Panc1 (cell line): ENCODE measurements at regions of chr1 and their contacts with region 1.

Region 1: GRCh38 chr1:155091071-155091709 is 12.6 kb downstream of the EFNA3 start:
- DNase-seq: no peak
- ATAC-seq: peak; percentile 69
- H3K4me3 ChIP-seq: peak overlapping the region in 1 of 2 experiments; percentile 33; a peak in 2 of 4 replicates
- H3K27ac ChIP-seq: peak overlapping the region; percentile 24; the same call in 1 of the 2 replicates
- H3K4me1 ChIP-seq: peaks cover 18% of the 10 kb centered on the region; the same call in 1 of the 2 replicates
- H3K27me3 ChIP-seq: peaks cover 2% of the 10 kb centered on the region; the same call in 1 of the 2 replicates
- CTCF ChIP-seq: peak; percentile 98

Region 2: DNA sequence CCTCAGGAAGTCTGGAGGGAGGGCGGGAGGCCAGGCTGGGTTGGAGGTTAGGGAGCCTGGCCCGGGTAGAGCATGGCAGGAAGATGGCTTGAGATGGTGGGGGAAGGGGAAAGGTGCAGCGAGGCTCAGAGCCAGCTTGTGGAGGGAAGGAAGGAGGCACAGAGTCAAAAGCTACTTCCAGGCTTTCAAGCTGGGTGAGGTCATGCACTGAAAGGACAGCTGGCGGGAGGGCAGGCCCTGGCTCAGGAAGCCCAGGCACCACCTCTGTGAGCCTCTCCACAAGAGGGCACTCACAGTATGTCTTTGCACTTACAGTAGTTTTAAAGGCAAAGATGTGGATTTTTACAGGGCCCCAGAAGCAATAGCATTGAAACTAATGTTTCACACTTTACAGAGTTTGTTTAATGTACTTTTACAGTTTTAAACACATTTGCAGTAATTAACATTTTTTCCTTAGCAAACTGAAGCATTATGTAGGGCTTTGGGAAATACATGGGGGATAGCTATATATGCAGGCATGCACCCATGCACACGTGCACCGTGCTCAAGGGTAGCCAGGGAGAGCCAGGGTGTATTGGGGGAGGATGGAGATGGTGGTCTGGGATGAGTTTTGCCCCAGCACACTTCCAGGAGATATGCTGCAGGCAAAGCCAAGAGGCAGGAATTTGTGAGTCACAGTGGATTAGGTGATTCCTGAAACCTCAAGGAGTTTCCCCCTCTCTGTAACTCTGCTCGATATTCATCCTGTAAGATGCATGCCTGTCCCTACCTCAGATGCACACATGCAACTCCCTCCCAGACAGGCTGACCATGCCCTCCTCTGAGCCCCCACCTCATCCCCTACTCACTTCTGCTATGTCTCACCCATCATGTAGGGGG is 46.1 kb before region 1 on chr1:
- CTCF ChIA-PET with region 1: no interaction called
- POLR2A ChIA-PET with region 1: no interaction called
- in situ Hi-C with region 1: no loop called
- intact Hi-C with region 1: no loop called
- DNase-seq: peak; percentile 45
- ATAC-seq: peak; percentile 94
- H3K4me3 ChIP-seq: no peak overlapping the region
- H3K27ac ChIP-seq: no peak overlapping the region
- H3K4me1 ChIP-seq: peaks cover 5% of the 10 kb centered on the region
- H3K27me3 ChIP-seq: no peaks in the 10 kb centered on the region
- CTCF ChIP-seq: peak; percentile 89

Region 3: GRCh38 chr1:155127105-155127964 is 36.1 kb after region 1 on chr1 and contains the start of gene EFNA1:
- CTCF ChIA-PET with region 1: interaction called, 5 read pairs
- POLR2A ChIA-PET with region 1: interaction called, 3 read pairs
- in situ Hi-C with region 1: no loop called
- intact Hi-C with region 1: loop called (anchors 5 kb)
- DNase-seq: no peak
- ATAC-seq: peak; percentile 71
- H3K4me3 ChIP-seq: peak within 1 kb of the TSS; percentile 64 to 65
- H3K27ac ChIP-seq: peak within 1 kb of the TSS; percentile 92
- H3K4me1 ChIP-seq: peaks cover 59% of the 10 kb centered on the region
- H3K27me3 ChIP-seq: no peaks in the 10 kb centered on the region
- CTCF ChIP-seq: no peak
- total RNA-seq, gene EFNA1: 23.8 TPM

Region 4: GRCh38 chr1:155135415-155136028 is 44.3 kb after region 1 on chr1 and contains the start of gene SLC50A1:
- CTCF ChIA-PET with region 1: interaction called, 11 read pairs
- POLR2A ChIA-PET with region 1: no interaction called
- in situ Hi-C with region 1: no loop called
- intact Hi-C with region 1: no loop called
- DNase-seq: peak; percentile 62
- ATAC-seq: peak; percentile 86
- H3K4me3 ChIP-seq: peak within 1 kb of the TSS; percentile 60 to 86
- H3K27ac ChIP-seq: peak within 1 kb of the TSS; percentile 93
- H3K4me1 ChIP-seq: peaks cover 35% of the 10 kb centered on the region
- H3K27me3 ChIP-seq: no peaks in the 10 kb centered on the region
- CTCF ChIP-seq: no peak
- total RNA-seq, gene SLC50A1: 67.4 TPM

Region 5: DNA sequence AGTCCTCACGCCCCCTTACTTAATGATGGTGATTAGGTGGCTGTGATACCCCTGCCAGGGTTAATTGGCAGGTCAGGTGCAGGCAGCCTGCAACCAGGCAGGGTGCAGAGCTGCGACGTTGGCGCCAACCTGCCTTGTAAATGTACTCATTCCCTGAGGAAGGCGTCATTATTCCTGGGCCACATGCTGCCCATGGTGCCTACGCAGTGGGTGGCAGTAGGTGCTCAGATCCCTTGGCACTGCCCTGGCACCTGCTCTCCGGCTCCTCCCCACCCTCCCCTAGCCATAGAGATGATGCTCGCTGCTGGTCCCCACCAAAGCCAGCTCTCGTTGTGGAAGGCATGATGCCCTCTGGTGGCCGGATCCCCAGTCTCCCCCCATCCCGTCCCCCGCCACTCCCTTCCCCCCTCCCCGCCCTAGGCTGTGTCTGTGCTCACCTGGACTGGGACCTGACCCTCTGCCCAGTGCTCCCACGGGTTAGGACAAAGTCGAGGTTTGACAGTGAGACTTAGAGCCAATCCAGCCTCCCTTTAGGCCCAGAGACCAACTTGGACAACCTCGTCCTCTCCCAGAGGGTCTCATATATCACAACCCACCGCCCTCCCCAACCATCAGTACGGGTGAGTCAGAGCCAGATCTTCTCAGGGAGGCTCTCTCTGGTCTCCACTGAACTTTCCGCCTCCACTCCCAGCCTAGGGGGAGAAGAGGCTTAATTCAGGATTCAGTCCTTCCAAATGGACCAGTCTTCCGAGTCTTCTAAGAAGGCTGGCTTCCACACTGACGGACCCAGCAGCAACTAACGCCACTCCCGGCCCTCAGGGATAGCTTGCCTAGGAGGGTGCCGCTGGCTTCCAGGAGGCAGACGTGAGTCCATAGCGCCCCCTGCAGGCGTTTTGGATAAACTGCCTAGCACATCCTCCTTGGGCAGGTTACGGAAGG is 76.2 kb after region 1 on chr1:
- CTCF ChIA-PET with region 1: interaction called, 27 read pairs
- POLR2A ChIA-PET with region 1: interaction called, 3 read pairs
- in situ Hi-C with region 1: no loop called
- intact Hi-C with region 1: loop called (anchors 2 kb)
- DNase-seq: peak; percentile 64
- ATAC-seq: peak; percentile 86
- H3K4me3 ChIP-seq: peak overlapping the region; percentile 6 to 39; a peak in 3 of 4 replicates
- H3K27ac ChIP-seq: peak overlapping the region; percentile 35; the same call in 1 of the 2 replicates
- H3K4me1 ChIP-seq: peaks cover 14% of the 10 kb centered on the region
- H3K27me3 ChIP-seq: no peaks in the 10 kb centered on the region
- CTCF ChIP-seq: peak; percentile 93

Region 6: DNA sequence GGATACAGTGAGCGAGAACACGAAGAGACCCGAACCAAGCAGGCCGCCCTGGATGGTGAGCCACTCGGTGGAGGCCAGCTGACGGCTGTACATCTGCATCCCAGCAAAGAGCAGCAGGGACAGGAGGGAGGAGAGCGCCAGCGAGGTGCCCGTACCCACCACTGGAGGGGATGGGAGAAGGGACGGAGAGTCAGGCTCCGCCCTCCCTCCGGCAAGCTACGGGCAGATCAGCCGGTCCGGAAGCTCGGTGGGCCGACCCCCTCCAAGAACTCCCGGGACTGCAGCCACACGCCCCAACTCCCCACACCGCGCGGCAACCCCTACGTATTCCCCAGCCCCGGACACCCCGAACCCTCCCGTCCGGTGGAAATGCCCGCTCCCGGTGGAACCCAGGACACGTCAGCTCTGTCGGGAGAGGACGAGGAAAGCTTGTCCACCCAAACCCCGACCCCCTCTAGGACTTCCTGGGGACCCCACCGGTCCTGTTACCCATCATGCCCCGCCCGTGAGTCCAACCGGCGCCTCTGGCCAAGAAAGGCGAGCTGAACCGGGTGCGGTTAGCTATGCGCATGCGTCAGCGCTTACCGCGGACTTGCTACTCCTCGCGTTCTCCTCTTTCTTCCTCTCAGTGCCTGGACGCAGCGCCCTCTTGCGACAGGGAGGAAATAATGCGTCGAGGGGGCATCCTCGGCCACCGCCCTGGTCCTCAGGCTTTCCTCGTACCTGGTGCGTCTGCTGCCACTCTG is 81.7 kb after region 1 on chr1 and contains the start of gene KRTCAP2:
- CTCF ChIA-PET with region 1: interaction called, 27 read pairs
- POLR2A ChIA-PET with region 1: interaction called, 3 read pairs
- in situ Hi-C with region 1: no loop called
- intact Hi-C with region 1: loop called (anchors 2 kb)
- DNase-seq: peak; percentile 89
- ATAC-seq: peak; percentile 81
- H3K4me3 ChIP-seq: peak within 1 kb of the TSS; percentile 88 to 89
- H3K27ac ChIP-seq: peak within 1 kb of the TSS; percentile 92
- H3K4me1 ChIP-seq: peaks cover 24% of the 10 kb centered on the region
- H3K27me3 ChIP-seq: no peaks in the 10 kb centered on the region
- CTCF ChIP-seq: peak; percentile 97
- total RNA-seq, gene KRTCAP2: 155 TPM